ENCODE measurements at regions of chr1 and their contacts with region 1.

Region 1: GRCh38 chr1:56409094-56409691 is 170.2 kb downstream of the PLPP3 start:
- DNase-seq: peak; percentile 23 to 79
- H3K4me3 ChIP-seq: no peak overlapping the region
- H3K27ac ChIP-seq: no peak overlapping the region
- H3K4me1 ChIP-seq: peaks cover 0 to 3% (median 0%) of the 10 kb centered on the region in 4 experiments; a peak in 1 of 7 replicates
- H3K27me3 ChIP-seq: no peaks in the 10 kb centered on the region
- CTCF ChIP-seq: peak; percentile 71 to 77 (median 77)
- EP300 ChIP-seq: no peak
- POLR2A ChIP-seq: no peak
- RAD21 ChIP-seq: peak; percentile 82

Region 2: DNA sequence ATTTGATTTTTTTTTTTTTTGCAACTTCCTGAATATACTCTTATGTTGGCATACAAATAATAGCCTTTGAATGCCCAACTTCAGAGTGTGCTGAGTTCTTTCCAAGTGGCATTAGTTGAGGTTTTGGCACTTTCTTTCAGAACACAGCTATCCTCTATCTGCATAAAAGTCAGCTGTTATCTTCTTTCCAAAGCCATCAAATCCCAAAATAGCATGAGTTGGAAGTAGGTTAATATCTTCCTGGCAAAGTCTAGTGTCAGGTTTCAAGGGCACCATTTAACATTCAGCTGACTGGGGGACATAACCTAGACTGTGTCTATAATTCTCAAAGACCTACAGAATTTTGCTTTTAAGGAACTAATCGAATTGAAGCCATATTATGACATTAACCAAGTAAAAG is 53.8 kb before region 1 on chr1:
- CTCF ChIA-PET with region 1: no interaction called
- POLR2A ChIA-PET with region 1: no interaction called
- DNase-seq: no peak
- H3K4me3 ChIP-seq: no peak overlapping the region
- H3K27ac ChIP-seq: no peak overlapping the region
- H3K4me1 ChIP-seq: no peaks in the 10 kb centered on the region
- H3K27me3 ChIP-seq: no peaks in the 10 kb centered on the region
- CTCF ChIP-seq: no peak
- EP300 ChIP-seq: no peak
- POLR2A ChIP-seq: no peak
- RAD21 ChIP-seq: no peak

Region 3: GRCh38 chr1:56390227-56390867 is 18.8 kb before region 1 on chr1:
- CTCF ChIA-PET with region 1: interaction called, 40 read pairs
- POLR2A ChIA-PET with region 1: no interaction called
- DNase-seq: peak in 1 of 2 experiments; percentile 76
- H3K4me3 ChIP-seq: peak overlapping the region in 2 of 4 experiments; percentile 7 to 53; a peak in 4 of 8 replicates
- H3K27ac ChIP-seq: no peak overlapping the region
- H3K4me1 ChIP-seq: peaks cover 0 to 8% (median 5%) of the 10 kb centered on the region in 4 experiments; a peak in 2 of 7 replicates
- H3K27me3 ChIP-seq: no peaks in the 10 kb centered on the region
- CTCF ChIP-seq: no peak
- EP300 ChIP-seq: no peak
- POLR2A ChIP-seq: no peak
- RAD21 ChIP-seq: peak in 1 of 2 experiments; percentile 12; a peak in 2 of 4 replicates

Region 4: DNA sequence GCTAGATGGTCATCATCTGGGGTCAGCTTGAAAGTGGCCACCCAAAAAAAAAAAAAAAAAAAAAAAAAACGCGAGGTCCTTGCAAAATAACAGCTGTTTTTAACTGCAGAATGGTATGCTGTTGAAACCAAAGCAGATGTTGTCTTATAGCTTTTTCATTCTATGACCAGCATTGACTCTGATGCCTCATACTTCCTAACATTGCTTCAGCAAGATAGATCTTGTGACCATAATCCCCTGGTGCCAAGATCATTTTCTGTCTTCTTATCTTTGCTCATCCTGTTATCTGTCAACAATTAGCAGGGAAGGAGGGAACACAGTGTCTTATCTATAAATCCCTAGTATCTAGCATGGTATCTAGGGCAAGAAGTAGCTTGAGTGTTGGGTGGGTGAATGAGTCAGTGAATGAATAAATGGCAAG is 11.4 kb before region 1 on chr1:
- CTCF ChIA-PET with region 1: interaction called, 40 read pairs
- POLR2A ChIA-PET with region 1: no interaction called
- DNase-seq: no peak
- H3K4me3 ChIP-seq: no peak overlapping the region
- H3K27ac ChIP-seq: no peak overlapping the region
- H3K4me1 ChIP-seq: peaks cover 0 to 3% (median 0%) of the 10 kb centered on the region in 4 experiments; a peak in 1 of 7 replicates
- H3K27me3 ChIP-seq: no peaks in the 10 kb centered on the region
- CTCF ChIP-seq: no peak
- EP300 ChIP-seq: no peak
- POLR2A ChIP-seq: no peak
- RAD21 ChIP-seq: no peak